SK-N-SH (cell line): ENCODE measurements at regions of chr19 and their contacts with region 1.

Region 1: DNA sequence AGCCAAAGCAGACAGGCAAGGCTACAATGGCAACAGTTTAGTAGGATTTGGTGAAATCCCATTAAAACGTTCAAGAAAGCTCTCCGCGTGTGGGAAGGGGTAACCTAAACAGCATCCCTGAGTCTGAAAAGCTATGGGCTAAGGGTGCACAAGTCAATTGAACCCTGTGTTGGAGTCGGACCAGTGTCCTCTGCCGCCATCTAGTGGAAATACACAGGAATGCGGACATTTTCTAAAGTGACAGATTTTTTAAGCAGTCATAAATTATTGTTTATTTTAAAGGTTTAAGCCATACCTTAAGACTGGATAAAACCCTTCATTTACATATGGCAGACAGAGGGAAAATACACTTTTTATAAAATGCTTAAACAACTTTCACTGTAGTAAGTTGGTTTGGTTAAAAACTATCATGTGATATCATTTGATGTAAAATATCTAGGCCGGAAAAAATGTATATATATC is 26.5 kb upstream of the LSM14A start:
- DNase-seq: peak; percentile 74
- H3K4me3 ChIP-seq: no peak overlapping the region
- H3K27ac ChIP-seq: no peak overlapping the region
- H3K4me1 ChIP-seq: no peaks in the 10 kb centered on the region; a peak in 1 of 4 replicates
- H3K27me3 ChIP-seq: no peaks in the 10 kb centered on the region
- CTCF ChIP-seq: peak; percentile 94
- EP300 ChIP-seq: no peak
- RAD21 ChIP-seq: peak; percentile 90

Region 2: GRCh38 chr19:34120846-34121639 is 24.7 kb before region 1 on chr19:
- CTCF ChIA-PET with region 1: interaction called, 25 read pairs
- POLR2A ChIA-PET with region 1: no interaction called
- DNase-seq: peak; percentile 65
- H3K4me3 ChIP-seq: no peak overlapping the region; a peak in 1 of 4 replicates
- H3K27ac ChIP-seq: no peak overlapping the region
- H3K4me1 ChIP-seq: no peaks in the 10 kb centered on the region
- H3K27me3 ChIP-seq: no peaks in the 10 kb centered on the region; the same call in 1 of the 2 replicates
- CTCF ChIP-seq: peak; percentile 70
- EP300 ChIP-seq: no peak
- RAD21 ChIP-seq: peak; percentile 64

Region 3: DNA sequence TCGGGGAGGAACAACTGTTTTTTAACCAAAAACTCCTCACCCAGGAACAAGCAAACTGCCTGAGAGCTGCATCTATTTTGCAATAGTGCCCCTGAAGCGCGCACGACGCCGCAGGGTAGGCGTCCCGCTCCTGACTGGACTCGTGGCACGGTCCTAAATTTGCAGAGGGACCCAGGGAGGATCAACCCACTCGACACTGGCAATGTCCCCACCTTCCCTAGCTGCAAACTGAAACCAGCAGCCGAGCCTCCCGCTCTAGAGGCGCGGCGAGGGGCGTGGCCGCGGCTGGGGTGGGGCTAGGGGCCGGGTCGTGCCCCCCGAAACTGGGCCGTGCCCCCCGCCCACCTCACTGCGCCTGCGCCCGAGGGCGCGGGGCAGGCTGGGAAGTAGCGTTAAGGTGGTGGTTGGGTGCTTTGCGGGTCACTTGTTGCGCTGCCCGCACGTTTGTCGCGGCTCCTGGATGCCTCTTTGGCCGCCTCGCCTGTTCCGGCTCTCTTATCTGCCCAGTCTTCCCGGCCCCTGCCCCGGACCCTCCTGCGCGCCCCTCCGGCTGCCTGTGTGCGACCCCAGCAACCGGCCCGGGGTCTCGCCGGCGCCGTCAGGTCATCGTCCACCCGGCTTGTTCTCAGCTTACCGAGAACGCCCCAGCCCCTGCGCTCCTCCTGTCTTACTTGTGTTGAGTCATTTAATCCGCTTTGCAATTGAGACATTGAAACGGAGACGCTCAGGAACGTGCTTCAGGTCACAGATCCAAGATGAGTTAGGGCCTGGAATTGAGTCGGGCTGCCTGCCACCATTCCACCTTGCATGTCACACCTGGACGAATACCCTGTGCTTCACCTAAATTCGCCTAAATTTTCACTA is 11.3 kb before region 1 on chr19:
- CTCF ChIA-PET with region 1: interaction called, 10 read pairs
- POLR2A ChIA-PET with region 1: interaction called, 8 read pairs
- DNase-seq: peak; percentile 100
- H3K4me3 ChIP-seq: peak overlapping the region; percentile 68 to 79
- H3K27ac ChIP-seq: peak overlapping the region; percentile 51 to 76
- H3K4me1 ChIP-seq: no peaks in the 10 kb centered on the region; a peak in 1 of 4 replicates
- H3K27me3 ChIP-seq: no peaks in the 10 kb centered on the region
- CTCF ChIP-seq: no peak
- EP300 ChIP-seq: no peak; a peak in 1 of 4 replicates
- RAD21 ChIP-seq: no peak

Region 4: DNA sequence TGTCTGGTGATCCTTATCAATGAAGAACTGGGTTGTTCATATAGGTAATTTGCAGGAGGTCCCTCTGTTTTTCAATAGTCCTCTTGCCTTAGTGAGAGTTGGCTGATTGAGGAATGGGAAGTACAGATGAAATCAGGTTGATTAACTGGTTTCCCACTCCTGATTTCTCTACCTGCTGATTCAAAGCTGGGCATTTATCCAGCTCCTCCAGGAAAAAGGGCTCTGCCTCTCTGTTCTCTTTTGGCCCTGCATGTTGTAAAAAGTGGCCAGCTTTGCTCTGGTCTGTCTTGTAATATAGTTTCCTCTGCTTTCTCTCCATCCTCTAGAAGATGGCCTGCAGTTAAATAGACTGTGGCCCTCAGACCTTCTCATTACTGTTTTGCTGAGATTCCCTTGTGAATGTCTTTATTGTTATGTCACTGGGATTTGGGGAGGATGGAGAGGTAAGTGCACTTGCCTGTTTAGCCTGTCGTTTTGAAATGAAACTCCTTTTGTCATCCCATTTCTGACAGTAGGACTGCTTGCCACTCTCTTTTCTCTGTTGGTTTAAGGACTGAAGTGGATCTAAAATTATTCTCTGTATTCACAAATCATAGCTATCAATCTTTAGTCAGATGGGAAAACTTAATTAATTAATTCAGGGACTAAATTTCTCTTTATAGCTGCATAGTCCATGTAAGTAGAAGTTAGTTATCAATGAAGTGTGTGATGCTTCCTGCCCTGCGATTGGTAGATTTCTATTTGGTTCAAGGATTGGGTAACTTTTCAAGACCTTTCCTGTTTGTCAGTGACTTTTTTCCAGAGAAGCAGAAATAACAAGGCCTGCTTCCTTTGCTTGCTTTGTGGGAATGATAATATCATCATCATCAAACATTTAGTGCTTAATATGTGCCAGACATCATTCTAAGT is 137.1 kb after region 1 on chr19:
- CTCF ChIA-PET with region 1: no interaction called
- POLR2A ChIA-PET with region 1: no interaction called
- DNase-seq: no peak
- H3K4me3 ChIP-seq: no peak overlapping the region
- H3K27ac ChIP-seq: peak overlapping the region; percentile 3 to 35; a peak in 3 of 4 replicates
- H3K4me1 ChIP-seq: peaks cover 2 to 10% of the 10 kb centered on the region in 2 experiments; a peak in 2 of 4 replicates
- H3K27me3 ChIP-seq: no peaks in the 10 kb centered on the region
- CTCF ChIP-seq: no peak
- EP300 ChIP-seq: no peak
- RAD21 ChIP-seq: no peak